ENCODE measurements at regions of chr15 and their contacts with region 1.

Region 1: GRCh38 chr15:85494048-85494793 is 113.8 kb downstream of the AKAP13 start:
- DNase-seq: peak; percentile 95
- ATAC-seq: peak; percentile 97
- H3K4me3 ChIP-seq: peak overlapping the region; percentile 42
- H3K27ac ChIP-seq: peak overlapping the region; percentile 97
- H3K4me1 ChIP-seq: peaks cover 23% of the 10 kb centered on the region
- H3K27me3 ChIP-seq: no peaks in the 10 kb centered on the region
- CTCF ChIP-seq: no peak

Region 2: DNA sequence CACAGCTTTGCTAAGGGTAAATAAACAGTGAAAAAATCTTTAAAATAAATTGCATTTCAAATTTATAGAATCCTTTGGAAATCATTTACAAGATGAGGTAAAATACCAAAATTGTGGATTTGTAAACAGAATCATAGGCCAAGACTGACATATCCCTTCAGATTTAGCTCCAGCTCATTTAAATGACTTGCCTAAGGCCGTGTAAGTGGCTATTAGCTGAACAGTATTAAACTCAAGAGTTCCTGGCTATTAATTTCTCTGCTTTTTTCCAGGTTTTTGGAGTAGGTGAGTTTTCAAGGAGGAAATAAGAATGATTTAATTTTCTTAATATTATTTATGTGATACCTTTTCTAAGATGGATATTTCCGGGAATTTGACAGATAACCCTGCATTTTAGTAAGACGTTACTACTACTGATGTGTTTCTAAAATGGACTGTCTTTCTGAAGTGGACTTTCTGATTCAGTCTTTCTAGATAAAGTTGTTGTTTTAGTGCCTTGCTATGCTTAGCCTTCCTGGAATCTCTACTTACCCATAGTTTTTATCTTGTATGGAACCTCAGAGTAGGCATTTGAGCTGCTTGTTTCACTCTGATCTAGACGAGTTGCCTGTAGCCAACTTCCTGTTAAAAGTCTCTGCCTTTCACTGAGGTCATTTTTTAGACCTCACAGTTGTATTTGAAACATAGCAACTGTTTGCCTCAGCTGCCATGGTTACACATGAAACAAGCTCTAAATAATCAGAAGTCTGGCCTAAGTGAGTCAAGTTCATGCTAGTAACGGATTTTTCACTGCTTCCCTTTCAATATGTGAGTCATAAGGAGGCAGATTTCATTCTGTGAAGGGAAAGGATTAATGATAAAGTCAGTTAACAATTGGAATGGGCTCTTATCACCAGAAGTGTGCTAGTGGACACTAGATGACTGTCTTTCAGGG is 173.5 kb after region 1 on chr15:
- CTCF ChIA-PET with region 1: no interaction called
- POLR2A ChIA-PET with region 1: no interaction called
- intact Hi-C with region 1: loop called (anchors 5 kb)
- DNase-seq: peak; percentile 83
- ATAC-seq: peak; percentile 95
- H3K4me3 ChIP-seq: no peak overlapping the region
- H3K27ac ChIP-seq: peak overlapping the region; percentile 80
- H3K4me1 ChIP-seq: peaks cover 14% of the 10 kb centered on the region
- H3K27me3 ChIP-seq: no peaks in the 10 kb centered on the region
- CTCF ChIP-seq: no peak